AG04449 (cell line): ENCODE measurements at regions of chr16 and their contacts with region 1.

Region 1: DNA sequence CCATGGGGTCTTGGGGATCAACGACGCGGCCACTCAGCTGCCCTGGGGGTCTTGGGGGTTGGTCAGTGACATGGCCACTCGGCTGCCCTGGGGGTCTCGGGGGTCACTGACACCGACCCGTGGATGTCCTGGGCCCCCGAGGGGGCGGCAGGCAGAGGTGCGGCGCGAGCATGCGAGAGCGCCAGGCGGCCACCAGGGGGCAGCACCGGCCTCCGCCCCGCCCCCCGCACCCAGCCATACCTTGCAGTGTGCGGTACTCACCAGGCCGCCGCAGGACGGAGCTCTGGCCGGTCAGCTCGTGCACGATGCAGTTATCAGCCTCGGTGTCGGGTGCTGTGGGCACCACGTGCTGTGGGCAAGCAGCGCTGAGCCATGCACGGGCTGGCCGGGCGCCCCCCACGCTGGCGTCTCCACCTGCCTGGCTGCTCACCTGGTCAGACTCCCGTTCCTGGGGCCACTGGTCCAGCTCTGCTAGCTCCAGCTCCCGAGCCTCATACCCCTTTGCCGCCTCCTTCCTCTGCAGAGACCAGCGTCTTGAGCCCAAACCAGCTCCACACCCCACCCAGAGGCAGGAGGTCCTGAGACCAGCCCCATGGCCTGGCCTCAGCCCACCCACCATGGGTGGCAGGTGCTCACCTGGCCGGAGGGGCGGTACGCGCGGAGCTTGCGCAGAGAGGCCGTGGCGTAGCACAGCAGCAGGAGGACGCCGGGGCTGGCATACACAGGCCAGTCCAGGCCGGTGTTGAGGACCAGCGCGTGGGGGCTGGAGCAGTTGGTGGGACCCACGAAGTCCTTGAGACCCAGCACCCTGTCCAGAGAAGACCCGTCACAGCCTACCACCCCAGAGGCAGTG is 31.2 kb downstream of the CTU2 start:
- DNase-seq: no peak
- H3K4me3 ChIP-seq: no peak overlapping the region
- CTCF ChIP-seq: peak; percentile 95

Region 2: GRCh38 chr16:88628512-88628974 is 109.0 kb before region 1 on chr16:
- CTCF ChIA-PET with region 1: no interaction called
- POLR2A ChIA-PET with region 1: no interaction called
- DNase-seq: no peak
- H3K4me3 ChIP-seq: no peak overlapping the region
- CTCF ChIP-seq: peak; percentile 56

Region 3: DNA sequence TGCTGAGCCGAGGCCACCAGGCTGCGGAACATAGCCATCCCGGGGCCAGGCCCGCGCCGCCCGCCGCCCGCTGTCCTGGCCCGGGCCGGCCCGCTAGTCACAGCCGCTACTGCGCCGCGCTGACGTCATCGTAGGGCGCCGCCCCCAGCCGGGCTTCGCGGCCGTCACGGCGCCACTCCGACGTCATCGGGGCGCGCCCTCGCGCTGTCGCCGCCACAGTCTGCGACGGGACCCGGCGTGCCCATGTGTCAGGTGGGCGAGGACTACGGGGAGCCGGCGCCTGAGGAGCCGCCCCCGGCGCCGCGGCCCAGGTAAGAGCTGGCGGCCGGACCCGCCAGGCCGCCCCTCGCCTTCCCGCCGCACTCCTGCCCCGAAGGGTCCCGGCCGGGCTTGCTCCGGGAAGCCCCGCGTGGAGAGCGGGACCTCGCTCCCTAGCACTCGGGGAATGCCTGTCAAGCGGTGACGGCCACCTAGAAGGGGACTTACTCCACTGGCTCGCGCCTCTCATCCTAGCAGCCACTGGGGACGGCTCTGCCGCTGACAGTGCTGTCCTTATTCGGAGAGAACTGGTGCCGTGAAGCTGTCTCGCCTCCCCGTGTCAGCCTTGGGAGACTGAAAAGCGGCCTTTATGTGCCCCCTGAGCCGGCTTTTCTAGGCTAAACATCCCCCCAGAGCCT is 31.1 kb before region 1 on chr16 and contains the starts of genes CTU2 and RNF166:
- CTCF ChIA-PET with region 1: interaction called, 25 read pairs
- POLR2A ChIA-PET with region 1: no interaction called
- DNase-seq: peak; percentile 14
- H3K4me3 ChIP-seq: peak within 1 kb of the TSS; percentile 96
- CTCF ChIP-seq: no peak

Region 4: DNA sequence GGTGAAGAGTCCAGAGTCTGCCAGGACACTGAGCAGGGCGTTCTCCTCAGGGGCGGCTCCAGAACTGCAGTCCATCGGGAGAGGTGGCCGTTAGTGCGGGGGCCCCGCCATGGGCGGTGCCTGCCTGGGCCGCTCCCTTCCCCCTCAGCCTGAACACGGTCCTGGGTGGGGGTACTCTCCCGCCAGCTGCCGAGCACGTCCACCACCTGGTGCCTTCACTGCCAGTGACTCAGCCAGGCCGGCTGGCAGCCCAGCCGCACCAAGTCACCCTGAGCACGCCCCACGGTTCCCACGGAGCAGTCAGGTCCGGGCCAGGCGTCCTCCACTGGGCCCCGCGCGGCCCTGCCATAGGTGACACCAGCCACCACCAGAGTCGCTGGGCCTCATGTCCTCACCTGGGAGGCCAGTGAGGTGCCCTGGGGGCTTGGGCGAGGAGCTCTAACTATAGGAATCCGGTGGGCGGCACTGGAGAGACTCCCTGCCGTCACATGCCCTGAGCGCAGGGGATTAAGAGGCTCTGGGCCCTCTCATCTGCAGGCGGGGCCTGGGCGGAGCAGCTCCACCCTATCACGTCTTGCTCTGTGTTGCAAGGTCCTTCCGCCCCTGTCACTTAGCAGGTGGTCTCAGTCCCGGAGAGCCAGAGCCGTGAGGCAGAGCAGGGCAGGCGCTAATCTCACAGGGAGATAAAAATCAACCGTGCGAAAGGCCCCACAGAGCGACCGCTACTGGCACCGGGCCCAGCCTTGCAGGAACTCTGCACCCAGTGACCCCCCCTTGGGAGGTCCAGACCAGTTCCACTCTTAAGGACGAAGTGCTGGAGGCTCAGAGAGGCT is 33.2 kb after region 1 on chr16:
- CTCF ChIA-PET with region 1: interaction called, 544 read pairs
- POLR2A ChIA-PET with region 1: no interaction called
- DNase-seq: no peak
- H3K4me3 ChIP-seq: peak overlapping the region; percentile 18; the same call in 1 of the 2 replicates
- CTCF ChIP-seq: no peak

Region 5: GRCh38 chr16:88799569-88800276 is 62.2 kb after region 1 on chr16:
- CTCF ChIA-PET with region 1: interaction called, 20 read pairs
- POLR2A ChIA-PET with region 1: no interaction called
- DNase-seq: no peak
- H3K4me3 ChIP-seq: no peak overlapping the region
- CTCF ChIP-seq: no peak

Region 6: GRCh38 chr16:88856828-88857733 is 119.6 kb after region 1 on chr16 and contains the starts of genes GALNS and TRAPPC2L:
- CTCF ChIA-PET with region 1: interaction called, 14 read pairs
- POLR2A ChIA-PET with region 1: no interaction called
- DNase-seq: peak; percentile 29
- H3K4me3 ChIP-seq: peak within 1 kb of the TSS; percentile 99
- CTCF ChIP-seq: no peak

Region 7: DNA sequence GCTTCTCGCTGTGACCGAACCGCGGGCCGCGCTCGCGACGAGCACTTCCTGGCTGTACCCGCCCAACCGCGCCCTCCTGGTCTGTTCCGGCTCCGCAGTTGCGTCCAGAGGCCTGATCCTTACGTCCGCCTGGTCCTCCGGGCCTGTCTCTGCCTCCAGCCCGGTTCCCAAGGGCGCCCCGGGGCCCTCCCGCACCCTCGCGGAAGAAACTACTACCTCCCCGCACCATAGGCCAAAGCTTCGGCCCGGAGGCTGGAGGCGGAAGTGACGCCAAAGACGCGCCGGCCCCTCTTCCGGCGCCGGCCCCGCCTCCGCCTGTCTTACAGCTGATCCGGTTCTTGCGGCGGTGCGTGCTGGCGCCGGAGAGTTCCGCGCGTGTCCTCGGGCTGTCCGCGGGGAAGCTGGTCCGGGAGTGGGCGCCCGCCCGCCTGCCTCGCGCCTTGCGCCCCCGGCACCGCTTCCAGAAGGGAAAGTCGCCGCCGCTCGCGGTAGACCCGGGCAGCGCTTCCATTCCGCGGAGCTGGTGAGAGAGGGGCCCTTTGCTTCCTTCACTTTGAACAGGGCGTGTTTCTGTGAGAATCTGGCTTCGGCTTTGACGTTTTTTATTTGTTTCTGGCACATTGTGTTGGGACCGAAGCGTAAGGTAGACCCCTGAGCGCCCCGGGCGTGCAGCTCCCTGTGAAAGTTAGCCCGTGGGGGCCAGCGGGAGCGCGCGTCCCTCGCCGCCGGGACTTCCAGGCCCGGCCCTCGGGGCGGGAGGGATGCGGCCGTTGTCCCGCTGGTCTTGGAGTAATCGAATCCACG is 480.1 kb after region 1 on chr16 and contains the start of gene ZNF778:
- CTCF ChIA-PET with region 1: interaction called, 12 read pairs
- POLR2A ChIA-PET with region 1: no interaction called
- DNase-seq: peak; percentile 16
- H3K4me3 ChIP-seq: peak within 1 kb of the TSS; percentile 96
- CTCF ChIP-seq: no peak